Heart right ventricle (tissue), 16 donors: ENCODE measurements at regions of chr16 and their contacts with region 1.

Region 1: GRCh38 chr16:29112755-29113347 is 128.0 kb downstream of the LAT start:
- DNase-seq: no peak
- ATAC-seq: no peak
- H3K4me3 ChIP-seq: no peak overlapping the region
- H3K27ac ChIP-seq: no peak overlapping the region
- H3K4me1 ChIP-seq: peaks cover 0 to 32% (median 13%) of the 10 kb centered on the region in 9 donors
- H3K27me3 ChIP-seq: no peaks in the 10 kb centered on the region
- CTCF ChIP-seq: peak in 2 of 9 donors; percentile 7 to 14

Region 2: DNA sequence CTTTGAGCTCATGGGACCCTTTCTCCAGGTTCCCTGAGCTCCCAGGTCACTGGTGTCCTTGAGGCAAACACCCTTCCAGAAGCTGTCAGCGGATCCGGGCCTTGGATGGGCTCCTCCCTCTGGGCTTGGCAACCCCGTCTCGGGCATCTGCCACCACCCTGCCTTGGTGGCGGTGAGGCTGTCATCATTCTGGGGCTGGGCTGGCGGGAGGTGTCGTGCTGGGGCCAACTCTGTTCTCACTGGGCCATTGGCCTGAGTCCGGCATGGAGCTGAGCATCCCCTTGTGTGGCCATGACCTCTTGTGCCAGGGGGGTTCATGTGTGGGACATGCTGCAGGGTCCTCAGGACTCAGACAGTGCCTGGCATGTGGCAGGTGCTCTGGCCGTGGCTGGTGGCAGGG is 69.7 kb after region 1 on chr16:
- intact Hi-C with region 1: loop called in 3 of 10 experiments (anchors 5 to 10 kb)
- DNase-seq: peak; percentile 60 to 79
- ATAC-seq: peak in 7 of 8 donors; percentile 4 to 45 (median 20)
- H3K4me3 ChIP-seq: no peak overlapping the region
- H3K27ac ChIP-seq: peak overlapping the region; percentile 40 to 95 (median 74)
- H3K4me1 ChIP-seq: peaks cover 9 to 70% (median 54%) of the 10 kb centered on the region in 9 donors
- H3K27me3 ChIP-seq: no peaks in the 10 kb centered on the region
- CTCF ChIP-seq: no peak

Region 3: DNA sequence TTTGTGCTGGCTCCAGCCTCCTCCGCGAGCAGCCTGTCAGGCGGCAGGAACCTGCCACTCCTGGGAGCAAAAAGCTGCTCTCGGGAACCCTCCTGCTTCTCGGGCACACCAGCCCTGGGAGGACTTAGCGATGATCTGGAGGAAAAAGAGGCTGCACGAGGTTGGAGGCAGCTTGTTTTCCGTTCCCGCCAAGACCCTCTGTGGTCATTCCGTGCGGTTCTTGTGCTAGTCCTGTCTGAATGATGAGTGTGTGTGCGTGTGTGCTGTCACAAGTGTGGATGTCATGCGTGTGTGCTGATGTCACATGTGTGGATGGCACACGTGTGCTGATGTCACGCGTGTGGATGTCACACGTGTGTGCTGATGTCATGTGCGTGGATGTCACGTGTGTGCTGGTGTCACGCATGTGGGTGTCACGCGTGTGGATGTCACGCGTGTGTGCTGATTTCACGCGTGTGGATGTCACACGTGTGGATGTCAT is 143.7 kb after region 1 on chr16:
- intact Hi-C with region 1: loop called in 5 of 10 experiments (anchors 5 to 10 kb)
- DNase-seq: no peak
- ATAC-seq: no peak
- H3K4me3 ChIP-seq: no peak overlapping the region
- H3K27ac ChIP-seq: peak overlapping the region in 1 of 10 donors; percentile 64
- H3K4me1 ChIP-seq: peaks cover 4 to 44% (median 15%) of the 10 kb centered on the region in 9 donors
- H3K27me3 ChIP-seq: no peaks in the 10 kb centered on the region
- CTCF ChIP-seq: no peak

Region 4: DNA sequence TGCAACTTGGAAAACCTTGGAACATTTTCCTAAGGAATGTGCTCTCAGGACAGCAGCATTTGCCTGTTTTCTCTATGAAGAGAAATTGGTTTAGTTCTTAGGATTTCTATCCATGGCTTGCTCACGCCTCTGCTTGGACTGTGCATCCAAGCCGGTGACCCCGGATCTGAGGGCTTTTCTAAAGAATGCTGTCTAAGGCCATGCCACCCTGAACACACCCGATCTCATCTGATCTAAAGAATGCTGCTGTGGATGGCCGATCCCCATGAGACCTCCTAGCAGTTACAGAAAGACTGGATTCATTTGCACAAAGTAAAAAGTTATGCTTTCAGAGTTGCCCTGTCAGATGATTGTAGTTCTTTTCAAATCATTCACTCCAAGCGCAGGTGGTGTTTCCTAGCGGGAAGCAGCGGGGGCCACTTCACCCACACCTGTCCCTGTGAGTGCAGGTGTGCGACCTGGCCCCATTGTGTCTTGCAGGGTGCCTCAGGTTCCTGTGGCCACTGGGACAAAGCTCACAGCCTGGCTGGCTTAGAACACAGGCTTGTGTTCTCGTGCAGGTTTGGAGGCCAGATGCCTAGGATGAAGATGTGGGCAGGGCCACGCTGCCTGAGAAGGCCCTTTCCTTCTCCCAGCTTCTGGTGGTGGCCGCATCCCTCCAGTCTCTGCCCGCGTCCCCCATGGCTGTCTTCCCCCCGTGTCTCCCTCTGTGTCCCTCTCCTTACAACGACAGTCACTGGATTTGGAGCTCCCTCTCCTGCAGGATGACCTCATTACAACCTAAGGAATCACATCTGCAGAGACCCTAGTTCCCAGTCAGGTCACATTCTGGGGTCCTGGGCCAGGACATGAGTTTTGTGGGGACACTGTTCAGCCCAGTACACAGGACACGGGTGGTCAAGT is 203.0 kb after region 1 on chr16:
- intact Hi-C with region 1: loop called in 1 of 10 experiments (anchors 10 kb)
- DNase-seq: no peak
- ATAC-seq: no peak
- H3K4me3 ChIP-seq: no peak overlapping the region
- H3K27ac ChIP-seq: no peak overlapping the region
- H3K4me1 ChIP-seq: peaks cover 4 to 52% (median 23%) of the 10 kb centered on the region in 9 donors
- H3K27me3 ChIP-seq: no peaks in the 10 kb centered on the region
- CTCF ChIP-seq: peak in 7 of 9 donors; percentile 7 to 43 (median 19)

Region 5: GRCh38 chr16:30526137-30526822 is 1413.4 kb after region 1 on chr16 and contains the start of gene ZNF768:
- intact Hi-C with region 1: no loop called
- DNase-seq: peak in 1 of 2 donors; percentile 48
- ATAC-seq: peak; percentile 13 to 67 (median 50)
- H3K4me3 ChIP-seq: peak within 1 kb of the TSS; percentile 52 to 87 (median 71)
- H3K27ac ChIP-seq: peak within 1 kb of the TSS; percentile 94 to 100 (median 99)
- H3K4me1 ChIP-seq: peaks cover 8 to 48% (median 38%) of the 10 kb centered on the region in 9 donors
- H3K27me3 ChIP-seq: no peaks in the 10 kb centered on the region
- CTCF ChIP-seq: no peak
- total RNA-seq, gene ZNF768: 36.0 to 71.7 (median 43.3) TPM